BJ (cell line): ENCODE measurements at regions of chr16 and their contacts with region 1.

Region 1: GRCh38 chr16:2023098-2023925 is 3.4 kb upstream of the NHERF2 start:
- DNase-seq: no peak
- H3K4me3 ChIP-seq: peak overlapping the region; percentile 18
- H3K27me3 ChIP-seq: peaks cover 6% of the 10 kb centered on the region; the same call in 1 of the 2 replicates
- CTCF ChIP-seq: peak; percentile 89

Region 2: DNA sequence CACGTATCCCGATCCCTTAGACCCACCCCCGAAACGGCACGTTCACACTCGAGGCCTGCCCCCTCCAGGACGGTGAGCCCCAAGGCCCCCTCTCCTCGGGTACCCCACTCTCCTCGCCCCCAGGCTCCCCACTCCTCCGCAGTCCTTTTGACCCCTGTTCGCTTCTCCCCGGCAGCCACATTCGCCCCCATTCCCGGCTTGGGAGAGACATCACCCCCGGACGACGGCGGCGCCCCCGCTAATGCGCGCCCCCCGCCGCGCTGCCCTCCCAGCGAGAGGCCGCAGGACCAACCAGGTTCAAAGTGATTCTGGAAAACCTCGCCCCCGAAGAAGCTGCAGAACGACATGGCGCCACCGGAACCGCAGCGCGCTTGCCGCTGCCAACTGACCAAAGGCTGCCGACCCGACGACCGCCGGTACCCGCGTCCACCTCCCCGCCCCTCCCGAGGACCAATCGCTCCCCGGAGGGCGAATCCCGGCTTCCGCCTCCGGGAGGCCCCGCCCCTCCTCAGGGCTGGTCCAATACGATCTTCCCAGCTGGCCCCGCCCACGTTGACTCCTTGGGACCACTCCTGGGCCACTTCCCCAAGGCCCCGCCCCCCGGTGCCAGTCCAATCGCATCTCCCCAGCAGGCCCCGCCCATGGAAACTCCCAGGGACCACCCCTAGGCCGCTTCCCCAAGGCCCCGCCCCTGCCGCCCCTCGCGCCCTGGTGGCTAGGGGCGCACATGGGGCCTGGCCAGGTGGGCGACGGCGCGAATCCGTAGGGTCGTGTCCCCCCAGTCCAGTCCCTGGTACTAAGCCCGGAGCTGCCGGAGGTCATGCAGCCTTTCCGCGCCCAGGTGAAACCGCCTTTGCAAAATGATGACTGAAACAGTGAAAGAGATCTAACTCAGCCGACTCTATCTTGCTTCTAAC is 80.2 kb before region 1 on chr16 and contains the start of gene MSRB1:
- CTCF ChIA-PET with region 1: no interaction called
- POLR2A ChIA-PET with region 1: no interaction called
- DNase-seq: peak; percentile 85
- H3K4me3 ChIP-seq: peak within 1 kb of the TSS; percentile 81
- H3K27me3 ChIP-seq: no peaks in the 10 kb centered on the region
- CTCF ChIP-seq: no peak
- polyA plus RNA-seq, gene MSRB1: 44.4 and 61.9 TPM in 2 replicates

Region 3: GRCh38 chr16:2003827-2004641 is 19.3 kb before region 1 on chr16:
- CTCF ChIA-PET with region 1: interaction called, 20 read pairs
- POLR2A ChIA-PET with region 1: no interaction called
- DNase-seq: peak; percentile 12
- H3K4me3 ChIP-seq: no peak overlapping the region
- H3K27me3 ChIP-seq: no peaks in the 10 kb centered on the region
- CTCF ChIP-seq: peak; percentile 98

Region 4: DNA sequence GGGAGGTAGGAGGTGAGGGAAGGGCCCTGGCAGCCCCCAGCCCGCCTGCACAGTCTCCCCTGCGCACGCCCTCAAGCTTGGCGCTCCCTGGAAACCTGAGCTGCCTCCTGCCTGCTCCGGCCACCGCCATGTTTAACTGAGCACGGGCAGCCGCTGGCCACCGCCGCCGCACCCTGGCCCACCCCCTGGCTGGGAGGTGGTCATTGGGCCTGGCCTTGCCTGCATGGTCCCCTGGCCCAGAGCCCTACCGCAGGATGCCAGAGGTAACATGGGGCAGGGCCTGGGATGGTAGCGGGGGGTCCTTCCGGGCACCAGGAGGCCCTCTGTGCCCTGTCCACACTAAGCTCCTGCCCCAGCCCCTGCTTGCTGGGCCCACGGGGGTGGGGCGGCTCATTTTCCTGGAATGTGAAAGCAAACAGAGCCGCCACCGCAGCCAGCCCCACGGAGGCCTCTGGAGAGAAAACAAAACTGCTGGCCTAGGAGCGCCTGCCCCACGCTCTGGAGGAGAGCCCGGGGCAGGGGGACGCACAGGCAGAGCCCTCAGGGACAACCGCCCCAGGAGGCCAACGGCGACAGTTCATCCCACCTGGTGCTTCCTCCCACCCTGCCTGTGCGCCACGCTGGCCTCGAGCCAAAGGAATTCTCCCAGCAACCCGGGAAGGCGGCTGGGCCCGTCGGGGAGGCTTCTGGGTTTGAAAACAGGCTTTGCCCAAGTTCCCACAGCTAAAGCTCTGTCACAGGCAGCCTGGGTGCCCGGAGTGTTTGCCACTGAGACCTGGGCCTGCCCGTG is 12.3 kb after region 1 on chr16:
- CTCF ChIA-PET with region 1: interaction called, 10 read pairs
- POLR2A ChIA-PET with region 1: no interaction called
- DNase-seq: no peak
- H3K4me3 ChIP-seq: peak overlapping the region; percentile 20
- H3K27me3 ChIP-seq: no peaks in the 10 kb centered on the region
- CTCF ChIP-seq: no peak

Region 5: GRCh38 chr16:2056681-2057407 is 33.5 kb after region 1 on chr16:
- CTCF ChIA-PET with region 1: interaction called, 34 read pairs
- POLR2A ChIA-PET with region 1: no interaction called
- DNase-seq: no peak
- H3K4me3 ChIP-seq: no peak overlapping the region
- H3K27me3 ChIP-seq: no peaks in the 10 kb centered on the region
- CTCF ChIP-seq: no peak